ENCODE measurements at regions of chr14 and their contacts with region 1.

Region 1: DNA sequence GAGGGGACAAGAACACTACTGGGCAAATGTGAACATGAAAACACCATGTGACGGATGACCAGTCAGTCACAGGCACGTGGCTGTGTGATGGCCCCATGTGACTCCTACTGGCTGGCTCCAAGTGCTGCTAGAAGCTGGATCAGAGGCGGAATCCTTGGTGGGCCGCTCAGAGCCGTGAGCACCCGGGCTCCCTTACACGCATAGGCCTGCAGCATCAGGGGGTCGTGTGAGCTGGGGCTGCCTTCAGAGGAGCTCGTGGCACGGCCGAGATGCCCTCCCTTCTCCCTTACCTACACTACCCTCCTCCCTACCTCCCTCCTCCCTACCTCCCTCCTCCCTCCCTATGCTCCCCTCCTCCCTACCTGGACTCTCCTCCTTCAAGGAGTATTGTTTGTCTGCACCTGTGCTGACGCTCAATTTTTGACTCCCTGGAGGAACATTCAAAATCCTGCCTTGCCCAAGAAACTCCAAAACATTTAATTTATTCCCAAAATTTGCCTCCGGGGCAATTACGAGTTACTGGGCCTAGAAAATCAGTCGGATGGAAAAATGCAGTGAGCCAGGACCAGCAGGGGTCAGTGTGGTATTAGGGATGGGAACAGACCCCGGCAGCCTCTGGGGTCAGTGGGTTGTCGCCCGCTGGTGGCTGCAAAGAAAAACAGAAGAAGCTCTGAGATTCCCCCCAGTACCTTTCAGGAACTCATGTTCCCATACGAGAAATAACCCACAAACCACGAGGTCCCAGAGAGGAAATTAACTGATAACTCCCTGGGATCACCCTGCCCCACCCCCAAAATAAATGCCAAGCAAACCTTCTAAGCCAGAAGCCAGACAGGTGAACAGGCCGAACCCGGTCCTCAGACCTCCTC is 61.2 kb downstream of the C14orf132 start:
- DNase-seq: peak; percentile 80
- H3K4me3 Mint-ChIP-seq: no peak overlapping the region
- H3K27ac Mint-ChIP-seq: no peak overlapping the region
- H3K4me1 Mint-ChIP-seq: peaks cover 15% of the 10 kb centered on the region
- H3K27me3 Mint-ChIP-seq: no peaks in the 10 kb centered on the region
- CTCF ChIP-seq: peak; percentile 96

Region 2: DNA sequence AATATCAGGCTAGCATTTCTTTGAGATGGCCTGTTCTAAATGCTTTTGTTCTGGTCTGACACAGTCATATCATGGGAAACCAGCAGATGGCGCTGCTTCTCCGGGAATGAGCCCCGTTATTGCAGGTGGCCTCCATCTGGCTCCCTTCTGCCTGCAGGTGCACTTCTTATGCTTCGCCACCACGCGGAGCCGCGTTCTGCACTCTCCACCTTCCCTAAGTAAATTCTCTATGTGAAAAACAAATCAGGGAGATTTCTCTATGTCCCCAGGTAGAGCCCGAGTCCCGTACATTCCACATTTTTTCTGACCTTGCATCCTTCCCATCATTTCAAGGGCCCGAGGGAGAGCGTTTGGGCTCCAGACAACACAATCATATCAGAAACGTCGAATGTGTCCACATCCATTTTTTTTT is 539.4 kb before region 1 on chr14:
- CTCF ChIA-PET with region 1: interaction called, 4 read pairs
- POLR2A ChIA-PET with region 1: no interaction called
- intact Hi-C with region 1: loop called (anchors 2 kb)
- DNase-seq: peak; percentile 88
- H3K4me3 Mint-ChIP-seq: no peak overlapping the region
- H3K27ac Mint-ChIP-seq: no peak overlapping the region
- H3K4me1 Mint-ChIP-seq: no peaks in the 10 kb centered on the region
- H3K27me3 Mint-ChIP-seq: peaks cover 18% of the 10 kb centered on the region
- CTCF ChIP-seq: peak; percentile 96

Region 3: DNA sequence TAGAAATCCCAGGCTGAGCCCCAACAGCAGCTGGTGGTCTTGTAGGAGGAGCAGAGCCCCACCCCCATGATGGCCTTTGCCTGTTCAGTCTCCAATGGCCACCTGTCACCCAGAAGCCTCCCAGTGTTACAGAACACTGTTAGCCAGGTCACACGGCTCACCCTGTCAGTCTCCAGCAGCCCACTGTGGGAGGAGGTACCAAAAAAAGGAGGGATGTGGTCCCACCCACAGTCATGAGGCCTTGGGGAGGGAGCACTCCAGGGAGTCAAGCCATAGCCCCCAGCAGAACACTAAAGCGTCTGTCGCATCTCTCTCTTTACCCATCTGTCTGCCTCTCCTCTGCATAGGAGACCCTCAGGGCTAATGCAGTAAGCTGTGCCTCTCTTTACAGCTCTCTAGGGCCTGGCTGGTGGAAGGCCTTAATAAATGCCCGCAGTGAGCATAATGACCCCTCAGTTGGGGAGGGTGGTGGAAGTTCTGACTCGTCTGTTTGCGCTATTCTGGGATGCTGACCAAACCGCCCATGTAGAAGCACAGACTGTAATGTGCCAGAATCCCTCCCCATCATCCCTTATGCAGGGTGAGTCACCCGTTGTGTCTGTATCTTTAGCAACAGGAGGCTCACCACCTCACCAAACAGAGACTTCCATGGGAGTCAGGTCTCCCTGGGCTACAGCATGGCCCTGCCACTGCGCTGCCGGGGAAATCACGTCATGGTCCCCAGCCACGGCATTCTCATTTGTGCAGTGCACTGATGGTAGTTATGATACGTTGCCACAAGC is 46.6 kb before region 1 on chr14:
- CTCF ChIA-PET with region 1: interaction called, 188 read pairs
- POLR2A ChIA-PET with region 1: interaction called, 9 read pairs
- intact Hi-C with region 1: loop called (anchors 1 kb)
- DNase-seq: peak; percentile 57
- H3K4me3 Mint-ChIP-seq: no peak overlapping the region
- H3K27ac Mint-ChIP-seq: no peak overlapping the region
- H3K4me1 Mint-ChIP-seq: peaks cover 5% of the 10 kb centered on the region
- H3K27me3 Mint-ChIP-seq: peaks cover 26% of the 10 kb centered on the region
- CTCF ChIP-seq: no peak

Region 4: DNA sequence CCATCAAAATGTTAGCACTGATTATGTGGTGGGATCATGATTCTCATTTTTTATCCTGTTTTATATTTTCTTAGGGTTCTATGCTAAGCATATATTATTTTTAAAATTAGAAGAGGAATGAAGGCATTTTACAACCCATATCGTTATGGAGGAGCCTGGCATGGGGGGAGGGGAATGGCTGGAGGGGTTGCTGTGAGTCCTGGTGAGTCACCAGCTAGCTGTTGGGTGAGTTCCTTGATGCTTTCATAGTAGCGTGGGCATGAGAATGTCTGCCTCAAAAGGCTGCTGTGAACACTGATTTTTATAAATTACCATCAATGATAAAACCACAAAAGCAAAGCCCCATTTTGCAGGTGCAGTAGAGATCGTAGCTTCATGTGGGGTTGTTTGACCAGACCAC is 14.4 kb before region 1 on chr14:
- CTCF ChIA-PET with region 1: interaction called, 7 read pairs
- POLR2A ChIA-PET with region 1: interaction called, 13 read pairs
- intact Hi-C with region 1: no loop called
- DNase-seq: peak; percentile 84
- H3K4me3 Mint-ChIP-seq: peak overlapping the region; percentile 22
- H3K27ac Mint-ChIP-seq: peak overlapping the region; percentile 92
- H3K4me1 Mint-ChIP-seq: peaks cover 38% of the 10 kb centered on the region
- H3K27me3 Mint-ChIP-seq: no peaks in the 10 kb centered on the region
- CTCF ChIP-seq: no peak

Region 5: DNA sequence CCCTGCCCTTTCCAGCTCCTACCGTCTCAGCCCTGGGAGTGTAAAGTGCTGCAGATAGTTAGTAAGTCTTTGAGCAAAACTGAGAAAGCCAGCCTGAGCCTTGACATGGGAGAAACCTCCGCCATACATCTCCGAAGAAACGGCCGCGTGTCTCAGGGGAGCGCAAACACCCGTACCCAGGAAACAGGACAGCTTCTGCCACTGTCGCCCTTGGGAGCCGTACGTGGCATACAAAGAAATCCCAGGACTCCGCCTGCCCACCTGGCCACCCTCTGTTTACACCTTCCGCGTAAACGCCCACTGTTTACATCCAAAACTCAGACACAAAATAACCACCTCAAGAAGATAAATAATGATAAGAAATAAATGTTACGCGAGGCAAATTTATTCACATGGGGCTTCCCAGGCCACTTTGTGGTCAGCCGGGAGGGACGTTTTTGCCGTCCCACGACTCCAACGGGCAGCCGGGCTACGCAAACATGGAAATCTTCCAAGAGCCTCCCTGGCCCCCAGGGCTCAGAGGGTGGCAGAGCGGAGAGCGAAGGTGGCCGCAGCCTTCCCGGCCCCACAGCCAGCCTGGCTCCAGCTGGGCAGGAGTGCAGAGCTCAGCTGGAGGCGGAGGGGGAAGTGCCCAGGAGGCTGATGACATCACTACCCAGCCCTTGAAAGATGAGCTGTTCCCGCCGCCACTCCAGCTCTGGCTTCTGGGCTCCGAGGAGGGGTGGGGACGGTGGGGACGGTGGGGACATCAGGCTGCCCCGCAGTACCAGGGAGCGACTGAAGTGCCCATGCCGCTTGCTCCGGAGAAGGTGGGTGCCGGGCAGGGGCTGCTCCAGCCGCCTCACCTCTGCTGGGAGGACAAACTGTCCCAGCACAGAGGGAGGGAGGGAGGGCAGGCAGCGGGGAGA is 104.0 kb after region 1 on chr14 and contains the start of gene BDKRB2:
- CTCF ChIA-PET with region 1: interaction called, 3 read pairs
- POLR2A ChIA-PET with region 1: interaction called, 3 read pairs
- intact Hi-C with region 1: loop called (anchors 2 kb)
- DNase-seq: peak; percentile 85
- H3K4me3 Mint-ChIP-seq: peak within 1 kb of the TSS; percentile 74
- H3K27ac Mint-ChIP-seq: peak within 1 kb of the TSS; percentile 23
- H3K4me1 Mint-ChIP-seq: peaks cover 48% of the 10 kb centered on the region
- H3K27me3 Mint-ChIP-seq: no peaks in the 10 kb centered on the region
- CTCF ChIP-seq: no peak
- total RNA-seq, gene BDKRB2: 1.4 and 2.8 TPM in 2 replicates

Region 6: DNA sequence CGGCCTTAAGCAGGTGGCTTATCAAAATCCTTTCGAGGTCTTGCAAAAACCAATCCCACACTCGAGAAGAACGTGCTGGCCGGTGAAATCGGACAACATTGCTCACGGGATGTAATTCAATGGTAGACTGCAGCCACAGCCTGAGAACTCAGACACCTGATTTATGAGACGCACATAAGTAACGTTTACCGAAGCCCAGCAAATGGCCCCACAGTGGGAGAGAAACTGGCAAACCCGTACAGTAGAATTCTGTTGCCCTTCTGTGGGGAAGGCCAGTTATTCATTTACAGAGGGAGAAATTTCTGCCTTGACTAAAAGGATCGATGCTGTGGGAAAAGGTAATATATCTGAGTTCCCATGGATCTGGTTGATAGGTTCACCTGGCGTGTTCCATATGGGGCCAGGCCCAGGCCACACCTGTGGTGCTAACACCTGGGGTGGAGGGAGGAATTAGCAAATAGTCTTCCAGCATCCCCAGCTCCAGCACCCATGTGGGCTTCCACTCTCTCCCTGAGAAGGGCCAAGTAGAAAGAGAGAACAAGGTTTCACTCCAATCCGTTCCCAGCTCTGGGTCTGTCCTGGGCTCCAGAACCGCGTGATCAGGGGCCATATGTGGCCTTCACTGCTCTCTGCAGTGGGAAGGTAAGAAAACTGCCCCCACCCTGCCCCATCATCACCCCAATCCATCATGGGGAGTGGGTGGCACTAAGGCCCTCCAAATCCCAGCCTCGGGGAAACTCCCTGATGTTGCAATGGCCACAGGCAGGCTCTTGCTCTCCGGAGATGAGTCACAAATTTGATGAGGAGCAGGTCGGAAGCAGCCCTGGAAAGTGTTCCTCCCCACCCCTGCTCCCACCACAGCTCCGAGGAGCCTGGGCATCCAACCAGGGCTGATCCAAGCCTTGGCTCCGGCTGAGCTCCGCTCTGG is 168.3 kb after region 1 on chr14:
- CTCF ChIA-PET with region 1: interaction called, 298 read pairs
- POLR2A ChIA-PET with region 1: interaction called, 5 read pairs
- intact Hi-C with region 1: loop called (anchors 1 kb)
- DNase-seq: peak; percentile 98
- H3K4me3 Mint-ChIP-seq: peak overlapping the region; percentile 43
- H3K27ac Mint-ChIP-seq: peak overlapping the region; percentile 78
- H3K4me1 Mint-ChIP-seq: peaks cover 45% of the 10 kb centered on the region
- H3K27me3 Mint-ChIP-seq: no peaks in the 10 kb centered on the region
- CTCF ChIP-seq: no peak

Region 7: DNA sequence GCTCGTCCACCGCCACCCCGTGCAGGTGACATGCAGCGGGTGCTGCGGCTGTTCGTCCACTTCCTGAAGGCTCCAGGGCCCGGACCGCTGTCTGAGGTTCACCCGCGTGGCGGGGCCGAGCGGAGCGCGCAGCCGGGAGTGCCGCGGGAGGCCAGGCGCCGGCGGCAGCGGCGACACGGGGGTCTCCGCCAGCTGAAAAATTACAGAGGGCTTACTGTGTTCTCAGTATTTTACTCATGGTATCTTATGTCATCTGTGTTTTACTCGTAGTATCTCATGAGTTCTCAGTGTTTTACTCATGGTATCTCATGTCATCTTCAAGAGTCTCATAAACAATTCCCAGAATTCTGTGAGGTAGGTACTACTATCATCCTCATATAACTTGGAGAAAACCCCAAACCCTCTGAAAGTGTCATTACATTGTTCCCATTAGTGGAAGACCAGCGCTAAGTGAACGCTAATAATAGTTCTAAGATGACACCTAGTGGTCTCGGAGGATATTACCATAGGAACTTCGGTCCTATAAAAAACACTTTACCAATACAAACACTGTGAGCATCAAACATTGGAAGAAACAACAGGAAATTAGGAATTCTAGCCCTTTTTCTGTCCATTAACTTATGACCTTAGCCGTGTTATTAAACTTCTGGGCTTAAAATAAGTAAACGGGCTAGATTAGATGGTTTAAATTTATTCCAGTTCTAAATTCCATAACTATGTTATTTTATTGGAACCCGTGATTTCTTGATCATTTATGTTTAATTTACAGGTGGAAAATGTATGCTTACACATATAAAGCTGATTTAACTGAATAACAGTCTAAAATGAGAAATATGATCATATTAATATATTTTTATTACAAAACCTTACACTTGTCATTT is 324.0 kb after region 1 on chr14:
- CTCF ChIA-PET with region 1: interaction called, 4 read pairs
- POLR2A ChIA-PET with region 1: no interaction called
- intact Hi-C with region 1: loop called (anchors 1 kb)
- DNase-seq: peak; percentile 74
- H3K4me3 Mint-ChIP-seq: peak overlapping the region; percentile 64
- H3K27ac Mint-ChIP-seq: no peak overlapping the region
- H3K4me1 Mint-ChIP-seq: no peaks in the 10 kb centered on the region
- H3K27me3 Mint-ChIP-seq: no peaks in the 10 kb centered on the region
- CTCF ChIP-seq: peak; percentile 66